Calu3 (cell line): ENCODE measurements at regions of chr2 and their contacts with region 1.

Region 1: DNA sequence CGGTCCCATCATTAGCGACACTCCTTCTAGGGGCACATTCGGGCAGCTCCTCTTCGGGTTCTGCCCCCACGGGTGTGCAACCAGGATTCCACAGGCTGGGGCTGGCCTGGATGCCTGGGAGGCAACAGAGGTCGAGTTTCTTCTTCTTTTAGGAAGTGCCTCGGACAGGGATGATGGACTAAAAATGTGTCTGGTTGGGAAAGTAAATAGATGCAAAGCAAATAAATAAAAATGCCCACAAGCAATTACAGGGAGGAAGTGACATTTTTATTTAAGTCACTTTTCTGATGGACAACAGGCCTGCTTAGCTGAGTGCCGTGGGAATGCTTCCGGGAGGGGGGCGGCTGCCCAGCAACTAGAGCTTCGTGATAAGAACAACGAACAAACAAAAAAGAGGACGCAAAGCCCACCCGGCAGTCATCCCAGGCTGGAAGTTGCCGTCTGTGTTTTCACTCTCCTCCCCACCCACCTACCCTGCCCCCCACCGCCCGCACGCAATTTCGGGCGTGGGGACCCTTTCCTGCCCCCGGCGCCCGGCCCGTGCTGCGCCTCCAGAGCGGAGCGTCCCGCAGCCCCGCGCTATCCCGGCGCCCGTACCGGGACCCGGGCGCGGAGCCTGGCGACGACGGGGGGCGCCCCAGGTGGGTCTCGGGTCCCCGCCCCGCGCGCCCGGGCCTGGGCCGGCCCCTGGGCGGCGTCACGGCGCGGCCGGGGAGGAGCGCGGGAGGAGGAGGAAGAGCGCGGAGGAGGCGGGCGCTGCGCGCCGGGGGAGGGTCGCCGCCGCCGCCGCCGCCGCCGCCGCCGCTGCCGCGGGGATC is 412 bp upstream of the NCK2 start:
- DNase-seq: peak; percentile 72
- H3K4me3 Mint-ChIP-seq: peak overlapping the region; percentile 86
- H3K27ac Mint-ChIP-seq: peak overlapping the region; percentile 89
- H3K4me1 Mint-ChIP-seq: peaks cover 32% of the 10 kb centered on the region
- H3K27me3 Mint-ChIP-seq: peaks cover 12% of the 10 kb centered on the region
- CTCF ChIP-seq: no peak

Region 2: GRCh38 chr2:105604938-105605337 is 139.4 kb before region 1 on chr2:
- CTCF ChIA-PET with region 1: no interaction called
- intact Hi-C with region 1: no loop called
- DNase-seq: no peak
- H3K4me3 Mint-ChIP-seq: no peak overlapping the region
- H3K27ac Mint-ChIP-seq: no peak overlapping the region
- H3K4me1 Mint-ChIP-seq: peaks cover 8% of the 10 kb centered on the region
- H3K27me3 Mint-ChIP-seq: no peaks in the 10 kb centered on the region
- CTCF ChIP-seq: no peak

Region 3: DNA sequence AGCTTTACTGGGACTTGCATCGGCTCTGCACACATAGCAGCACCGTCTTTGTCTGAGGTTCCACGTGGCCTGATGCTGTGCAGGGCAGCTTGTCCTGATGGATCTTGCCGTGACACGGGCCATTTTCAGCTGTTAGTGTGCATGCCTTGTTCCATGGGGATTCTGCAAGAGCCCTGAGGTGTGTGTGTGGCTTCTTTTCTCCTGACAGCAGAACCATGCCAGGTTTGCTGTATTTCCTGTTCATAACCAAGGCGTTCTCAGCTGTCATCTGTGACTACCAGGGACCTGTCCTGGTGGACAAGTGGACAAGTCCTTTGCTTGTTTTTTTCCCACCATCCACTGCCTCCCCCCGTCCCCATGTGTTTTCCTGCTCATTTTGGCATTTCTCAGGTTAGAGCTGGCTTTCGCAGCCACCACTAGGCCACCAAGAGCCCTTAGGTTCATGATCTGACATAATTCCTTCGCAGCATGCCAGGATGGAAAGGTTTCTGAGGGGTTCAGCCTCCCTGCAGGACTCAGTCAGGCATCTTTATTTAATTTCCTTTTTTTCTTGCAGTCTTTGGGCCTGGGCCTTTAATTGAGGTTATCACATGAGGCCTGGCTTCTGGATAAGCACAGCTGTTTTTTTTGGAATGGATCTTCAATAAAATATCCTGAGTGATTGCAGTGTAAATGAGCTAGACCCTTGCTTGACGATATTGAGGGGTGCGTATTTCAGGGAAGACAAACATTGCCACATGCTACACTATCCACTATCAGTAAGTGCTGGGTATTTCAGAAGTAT is 139.8 kb after region 1 on chr2:
- CTCF ChIA-PET with region 1: no interaction called
- intact Hi-C with region 1: loop called (anchors 5 kb)
- DNase-seq: no peak
- H3K4me3 Mint-ChIP-seq: no peak overlapping the region
- H3K27ac Mint-ChIP-seq: no peak overlapping the region
- H3K4me1 Mint-ChIP-seq: peaks cover 33% of the 10 kb centered on the region
- H3K27me3 Mint-ChIP-seq: no peaks in the 10 kb centered on the region
- CTCF ChIP-seq: no peak

Region 4: GRCh38 chr2:105919826-105920225 is 175.5 kb after region 1 on chr2:
- CTCF ChIA-PET with region 1: no interaction called
- intact Hi-C with region 1: loop called (anchors 10 kb)
- DNase-seq: peak; percentile 73
- H3K4me3 Mint-ChIP-seq: peak overlapping the region; percentile 2
- H3K27ac Mint-ChIP-seq: peak overlapping the region; percentile 45
- H3K4me1 Mint-ChIP-seq: peaks cover 57% of the 10 kb centered on the region
- H3K27me3 Mint-ChIP-seq: no peaks in the 10 kb centered on the region
- CTCF ChIP-seq: peak; percentile 37